ENCODE measurements at regions of chr20 and their contacts with region 1.

Region 1: DNA sequence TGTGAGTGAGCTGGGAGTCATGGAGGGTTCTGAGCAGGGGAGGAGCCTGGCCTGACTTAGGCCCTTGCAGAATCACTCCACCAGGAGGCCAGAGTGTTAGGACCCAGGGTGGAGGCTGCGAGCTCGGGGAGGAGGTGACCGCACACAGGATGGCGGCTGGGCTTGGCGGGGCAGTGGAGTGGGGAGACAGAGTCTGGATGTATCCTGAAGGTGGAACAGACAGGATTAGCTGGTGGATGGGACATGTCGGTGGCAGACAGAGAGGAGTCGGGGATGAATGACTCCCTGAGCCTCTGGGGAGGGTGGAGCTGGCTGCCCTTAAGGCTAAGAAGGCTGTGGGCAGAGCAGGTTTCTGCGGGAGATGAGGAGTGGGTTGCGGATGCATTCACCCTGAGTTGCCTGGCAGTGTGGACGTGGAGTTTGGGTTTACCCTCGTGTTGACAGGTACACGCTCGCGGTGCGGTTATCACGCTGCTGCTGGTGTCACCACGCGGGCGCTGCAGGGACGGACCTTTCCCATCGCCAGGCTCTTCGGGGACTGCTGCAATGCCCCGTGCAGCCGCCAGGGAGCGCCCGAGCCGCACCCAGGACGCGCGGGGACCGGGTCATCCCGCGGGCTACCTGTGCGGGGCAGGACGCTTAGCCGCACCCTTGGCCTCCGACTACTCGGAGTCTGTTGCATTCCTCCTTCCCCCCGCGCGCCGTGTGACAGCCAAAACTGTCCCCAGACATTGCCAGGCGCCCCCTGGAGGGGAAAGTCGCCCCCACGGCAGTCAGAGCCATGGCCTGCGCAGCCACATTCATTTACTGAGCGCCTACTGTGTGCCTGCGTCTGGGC is 43.0 kb upstream of the PTGIS start:
- DNase-seq: peak; percentile 44 to 93 (median 80)

Region 2: GRCh38 chr20:49323622-49324238 is 287.2 kb before region 1 on chr20:
- intact Hi-C with region 1: loop called (anchors 10 kb)
- DNase-seq: peak in 2 of 42 donors; percentile 30 to 36

Region 3: DNA sequence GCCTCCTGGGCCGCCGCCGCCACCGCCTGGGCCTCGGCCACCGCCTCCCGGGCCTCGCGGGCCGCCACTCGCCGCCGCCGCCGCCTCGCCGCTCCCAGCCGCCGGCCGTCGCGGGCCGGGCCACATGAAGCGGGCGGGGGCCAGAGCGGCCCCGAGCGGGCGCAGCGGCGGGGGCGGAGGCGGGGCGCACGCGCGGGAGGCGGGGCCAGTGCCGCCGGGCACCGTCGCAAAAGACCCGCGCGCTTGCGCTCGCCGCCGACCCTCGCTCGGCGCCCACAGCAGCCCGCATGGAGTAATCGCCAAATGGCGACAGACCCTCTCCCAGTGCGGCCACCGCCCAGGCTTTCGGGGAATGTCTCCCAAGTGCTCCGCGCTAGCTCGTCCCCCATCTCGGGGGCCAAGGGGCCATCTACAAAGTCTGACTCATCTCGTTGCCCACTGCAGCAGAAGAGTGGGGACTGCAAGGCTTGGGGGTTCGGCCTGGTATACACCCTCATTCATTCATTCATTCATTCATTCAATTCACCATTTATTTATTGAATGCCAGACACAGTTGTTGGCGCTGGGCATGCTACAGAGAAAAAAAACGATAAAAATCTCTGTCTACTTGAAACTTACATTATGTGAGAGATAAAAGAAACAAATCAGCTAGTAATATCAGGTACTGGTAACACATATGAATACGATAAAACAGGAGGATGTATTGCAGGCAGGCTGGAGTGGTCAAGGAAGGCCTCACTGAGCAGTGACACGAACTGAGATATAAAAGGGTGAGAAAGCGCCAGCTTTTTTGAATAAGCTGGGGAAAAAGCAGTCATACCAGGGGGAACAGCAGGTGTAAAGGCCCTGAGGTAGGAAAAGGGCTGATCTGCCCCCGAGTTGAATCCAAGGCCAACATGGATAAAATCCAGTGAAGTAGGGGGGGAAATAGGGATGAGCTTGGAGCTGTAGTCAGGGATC is 103.1 kb after region 1 on chr20 and contains the start of gene B4GALT5:
- intact Hi-C with region 1: loop called (anchors 10 kb)
- DNase-seq: peak; percentile 57 to 91 (median 80)

Region 4: GRCh38 chr20:49768204-49769047 is 157.5 kb after region 1 on chr20:
- intact Hi-C with region 1: loop called (anchors 5 kb)
- DNase-seq: peak in 5 of 42 donors; percentile 14 to 57 (median 30)

Region 5: GRCh38 chr20:49846206-49846807 is 235.4 kb after region 1 on chr20:
- intact Hi-C with region 1: loop called (anchors 5 kb)
- DNase-seq: peak in 34 of 42 donors; percentile 17 to 88 (median 64)

Region 6: GRCh38 chr20:49888345-49888966 is 277.5 kb after region 1 on chr20:
- intact Hi-C with region 1: loop called (anchors 2 kb)
- DNase-seq: peak; percentile 57 to 95 (median 86)